Endothelial cell of umbilical vein (primary cell): ENCODE measurements at regions of chr1 and their contacts with region 1.

Region 1: DNA sequence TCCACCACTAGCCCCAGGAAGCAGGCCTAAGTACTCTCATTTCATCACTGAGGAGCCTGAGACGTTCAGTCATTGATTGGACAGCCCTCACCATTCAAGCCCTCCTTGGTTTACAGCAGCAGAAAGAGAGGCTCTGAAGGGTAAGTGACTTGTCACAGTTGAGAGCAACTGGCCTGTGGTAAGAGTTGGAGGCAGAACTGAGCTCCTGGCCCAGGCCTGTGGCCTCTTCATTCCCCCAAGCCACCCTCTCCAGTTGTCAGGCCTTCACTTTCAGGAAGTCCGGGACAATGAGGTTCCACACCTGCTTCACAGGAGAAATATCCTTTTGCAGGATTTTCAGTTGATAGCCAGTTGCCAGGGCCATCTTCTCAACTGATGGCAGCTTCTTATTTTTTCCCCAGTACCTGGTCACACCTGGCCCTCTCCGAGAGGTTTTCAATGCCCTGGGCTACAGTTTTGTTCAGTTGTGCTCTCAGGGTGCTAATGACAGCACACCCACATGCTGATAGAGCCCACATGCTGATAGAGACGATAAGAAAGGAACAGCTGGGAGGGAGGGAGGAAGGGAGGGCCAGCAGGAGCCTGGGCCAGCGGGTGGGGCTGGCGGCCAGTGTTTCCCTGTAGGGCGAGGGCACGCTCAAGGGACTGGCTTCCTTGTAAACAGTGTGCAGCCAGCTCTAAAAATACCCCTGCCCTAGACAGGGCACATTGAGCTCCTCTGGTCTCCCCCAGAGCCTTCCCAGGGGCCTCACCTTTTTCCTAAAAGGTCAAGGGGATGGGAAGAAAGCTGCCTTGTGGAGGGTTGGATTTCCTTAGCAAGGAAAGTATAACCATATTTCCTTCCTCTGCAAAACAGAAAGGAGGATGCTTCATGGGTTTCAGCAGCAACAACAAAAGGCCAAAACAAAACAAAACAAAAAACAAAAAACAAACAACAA is 112.7 kb upstream of the JUN start:
- DNase-seq: peak; percentile 79
- H3K4me3 ChIP-seq: no peak overlapping the region
- H3K27ac ChIP-seq: peak overlapping the region; percentile 61
- H3K4me1 ChIP-seq: peaks cover 75% of the 10 kb centered on the region
- H3K27me3 ChIP-seq: no peaks in the 10 kb centered on the region
- CTCF ChIP-seq: peak in 1 of 2 donors; percentile 17
- POLR2A ChIP-seq: no peak

Region 2: DNA sequence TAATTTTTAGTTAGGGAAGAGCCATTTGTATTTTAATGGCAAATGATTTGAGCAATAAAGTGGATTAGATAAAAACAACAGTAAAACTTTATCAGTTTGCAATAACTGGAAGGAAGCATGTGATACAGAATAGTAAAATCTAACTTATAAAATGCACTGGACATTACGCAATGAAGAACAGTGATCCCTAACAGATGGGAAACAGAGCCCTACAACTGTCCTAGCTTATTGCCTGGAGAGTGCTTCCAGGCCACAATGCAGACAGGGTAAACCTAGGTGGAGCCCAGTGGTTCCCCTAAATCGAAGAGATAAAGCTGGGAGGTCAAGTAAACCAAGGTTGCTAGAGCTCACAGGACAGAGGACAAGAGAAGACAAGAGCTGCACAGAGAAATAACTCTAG is 357.0 kb before region 1 on chr1:
- CTCF ChIA-PET with region 1: no interaction called
- POLR2A ChIA-PET with region 1: no interaction called
- dilution Hi-C with region 1: no loop called
- intact Hi-C with region 1: no loop called
- DNase-seq: no peak
- H3K4me3 ChIP-seq: no peak overlapping the region
- H3K27ac ChIP-seq: no peak overlapping the region
- H3K4me1 ChIP-seq: no peaks in the 10 kb centered on the region
- H3K27me3 ChIP-seq: no peaks in the 10 kb centered on the region
- CTCF ChIP-seq: no peak
- POLR2A ChIP-seq: no peak

Region 3: GRCh38 chr1:58848818-58849411 is 47.6 kb before region 1 on chr1:
- CTCF ChIA-PET with region 1: interaction called, 6 read pairs
- POLR2A ChIA-PET with region 1: interaction called, 3 read pairs
- dilution Hi-C with region 1: no loop called
- intact Hi-C with region 1: loop called (anchors 1 kb)
- DNase-seq: peak; percentile 95
- H3K4me3 ChIP-seq: no peak overlapping the region
- H3K27ac ChIP-seq: peak overlapping the region; percentile 95
- H3K4me1 ChIP-seq: peaks cover 30% of the 10 kb centered on the region
- H3K27me3 ChIP-seq: no peaks in the 10 kb centered on the region
- CTCF ChIP-seq: peak; percentile 8 to 24
- POLR2A ChIP-seq: no peak

Region 4: GRCh38 chr1:59061876-59062275 is 165.4 kb after region 1 on chr1:
- CTCF ChIA-PET with region 1: interaction called, 4 read pairs
- POLR2A ChIA-PET with region 1: no interaction called
- dilution Hi-C with region 1: no loop called
- intact Hi-C with region 1: loop called (anchors 5 kb)
- DNase-seq: peak; percentile 94
- H3K4me3 ChIP-seq: peak overlapping the region in 2 of 3 experiments; percentile 1 to 62
- H3K27ac ChIP-seq: peak overlapping the region; percentile 75
- H3K4me1 ChIP-seq: peaks cover 26% of the 10 kb centered on the region
- H3K27me3 ChIP-seq: no peaks in the 10 kb centered on the region
- CTCF ChIP-seq: no peak
- POLR2A ChIP-seq: peak; percentile 47

Region 5: GRCh38 chr1:59083946-59084865 is 187.7 kb after region 1 on chr1:
- CTCF ChIA-PET with region 1: interaction called, 4 read pairs
- POLR2A ChIA-PET with region 1: no interaction called
- dilution Hi-C with region 1: no loop called
- intact Hi-C with region 1: loop called (anchors 1 kb)
- DNase-seq: peak; percentile 67
- H3K4me3 ChIP-seq: no peak overlapping the region
- H3K27ac ChIP-seq: peak overlapping the region; percentile 49
- H3K4me1 ChIP-seq: peaks cover 23% of the 10 kb centered on the region
- H3K27me3 ChIP-seq: no peaks in the 10 kb centered on the region
- CTCF ChIP-seq: no peak
- POLR2A ChIP-seq: peak; percentile 20

Region 6: DNA sequence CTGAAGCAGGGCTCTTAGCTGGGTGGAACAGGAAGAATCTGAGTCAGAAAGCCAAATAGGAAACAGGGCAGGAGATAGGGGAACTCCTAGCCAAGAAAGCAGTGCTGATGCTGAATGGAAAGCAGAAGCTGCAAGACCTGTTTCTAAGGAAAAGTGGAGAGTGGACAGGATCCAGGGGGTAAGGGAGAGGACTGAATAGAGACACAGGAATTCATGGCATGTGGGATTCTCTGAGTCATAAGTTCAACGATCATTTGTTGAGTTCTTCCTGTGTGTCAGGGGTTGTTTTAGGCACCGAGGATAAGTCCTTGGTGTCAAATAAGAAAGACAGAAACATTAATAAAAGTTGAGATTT is 246.6 kb after region 1 on chr1:
- CTCF ChIA-PET with region 1: no interaction called
- POLR2A ChIA-PET with region 1: no interaction called
- dilution Hi-C with region 1: no loop called
- intact Hi-C with region 1: loop called (anchors 5 kb)
- DNase-seq: peak; percentile 91
- H3K4me3 ChIP-seq: no peak overlapping the region
- H3K27ac ChIP-seq: peak overlapping the region; percentile 82
- H3K4me1 ChIP-seq: peaks cover 43% of the 10 kb centered on the region
- H3K27me3 ChIP-seq: no peaks in the 10 kb centered on the region
- CTCF ChIP-seq: no peak
- POLR2A ChIP-seq: peak; percentile 45